ENCODE measurements at regions of chr18 and their contacts with region 1.

Region 1: DNA sequence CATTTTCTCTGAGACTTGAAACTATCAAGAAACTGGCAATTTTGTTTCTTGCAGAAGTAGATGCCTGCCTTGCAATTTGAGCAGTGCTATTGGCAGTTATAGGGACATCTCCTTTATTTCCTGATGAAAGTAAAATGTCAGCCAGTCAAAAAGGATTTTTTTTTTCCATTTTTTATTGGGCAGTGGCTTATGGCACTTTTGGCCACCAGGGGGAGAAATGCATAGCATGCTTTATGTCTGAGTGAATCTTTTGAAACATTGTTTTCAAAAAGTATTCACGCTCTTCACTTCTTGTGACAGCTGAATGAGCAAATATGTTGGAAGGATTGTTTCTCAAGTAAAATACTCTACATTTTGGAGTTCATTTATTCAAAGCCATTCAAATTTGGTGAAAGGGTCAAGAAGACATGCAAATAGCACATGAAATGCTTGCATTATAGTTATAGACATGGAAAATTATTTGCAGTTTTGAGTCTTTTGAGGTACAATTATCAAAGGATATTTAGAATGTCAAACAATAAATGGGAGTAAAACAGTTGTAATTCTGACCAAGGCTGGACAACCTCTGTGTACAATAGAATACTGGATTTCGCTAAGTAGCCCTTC is 491.0 kb downstream of the CDH2 start:
- DNase-seq: no peak
- H3K4me3 ChIP-seq: no peak overlapping the region
- CTCF ChIP-seq: peak; percentile 55

Region 2: GRCh38 chr18:27668158-27668557 is 17.8 kb before region 1 on chr18:
- CTCF ChIA-PET with region 1: interaction called, 32 read pairs
- POLR2A ChIA-PET with region 1: no interaction called
- DNase-seq: peak; percentile 55
- H3K4me3 ChIP-seq: no peak overlapping the region
- CTCF ChIP-seq: no peak

Region 3: GRCh38 chr18:27674411-27674810 is 11.5 kb before region 1 on chr18:
- CTCF ChIA-PET with region 1: interaction called, 32 read pairs
- POLR2A ChIA-PET with region 1: no interaction called
- DNase-seq: no peak
- H3K4me3 ChIP-seq: no peak overlapping the region
- CTCF ChIP-seq: no peak

Region 4: DNA sequence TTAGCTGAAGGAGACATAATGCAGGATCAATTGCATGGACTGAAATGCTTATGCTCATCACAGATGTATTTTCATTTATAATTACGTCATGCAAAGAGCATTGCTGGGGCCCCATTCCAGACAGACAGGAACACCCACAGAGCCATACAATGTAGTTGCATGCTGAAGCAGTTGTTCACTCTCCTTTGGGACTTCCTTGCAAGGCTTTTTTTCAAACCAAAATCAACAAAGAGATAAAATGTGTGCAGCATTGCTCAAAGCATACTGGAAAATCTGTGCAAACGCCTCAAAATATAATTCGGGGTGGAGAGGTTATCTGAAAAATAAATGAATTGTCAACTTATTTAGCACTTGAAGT is 27.8 kb after region 1 on chr18:
- CTCF ChIA-PET with region 1: interaction called, 22 read pairs
- POLR2A ChIA-PET with region 1: no interaction called
- DNase-seq: peak; percentile 88
- H3K4me3 ChIP-seq: no peak overlapping the region
- CTCF ChIP-seq: no peak

Measured in AG04449 (cell line).